OCI-LY7 (cell line): ENCODE measurements at regions of chr12 and their contacts with region 1.

Region 1: GRCh38 chr12:108570743-108571608 is 8.6 kb downstream of the ISCU start:
- DNase-seq: peak; percentile 75
- H3K4me3 ChIP-seq: no peak overlapping the region
- H3K27ac ChIP-seq: peak overlapping the region; percentile 93
- H3K4me1 ChIP-seq: peaks cover 83% of the 10 kb centered on the region
- CTCF ChIP-seq: peak; percentile 76

Region 2: DNA sequence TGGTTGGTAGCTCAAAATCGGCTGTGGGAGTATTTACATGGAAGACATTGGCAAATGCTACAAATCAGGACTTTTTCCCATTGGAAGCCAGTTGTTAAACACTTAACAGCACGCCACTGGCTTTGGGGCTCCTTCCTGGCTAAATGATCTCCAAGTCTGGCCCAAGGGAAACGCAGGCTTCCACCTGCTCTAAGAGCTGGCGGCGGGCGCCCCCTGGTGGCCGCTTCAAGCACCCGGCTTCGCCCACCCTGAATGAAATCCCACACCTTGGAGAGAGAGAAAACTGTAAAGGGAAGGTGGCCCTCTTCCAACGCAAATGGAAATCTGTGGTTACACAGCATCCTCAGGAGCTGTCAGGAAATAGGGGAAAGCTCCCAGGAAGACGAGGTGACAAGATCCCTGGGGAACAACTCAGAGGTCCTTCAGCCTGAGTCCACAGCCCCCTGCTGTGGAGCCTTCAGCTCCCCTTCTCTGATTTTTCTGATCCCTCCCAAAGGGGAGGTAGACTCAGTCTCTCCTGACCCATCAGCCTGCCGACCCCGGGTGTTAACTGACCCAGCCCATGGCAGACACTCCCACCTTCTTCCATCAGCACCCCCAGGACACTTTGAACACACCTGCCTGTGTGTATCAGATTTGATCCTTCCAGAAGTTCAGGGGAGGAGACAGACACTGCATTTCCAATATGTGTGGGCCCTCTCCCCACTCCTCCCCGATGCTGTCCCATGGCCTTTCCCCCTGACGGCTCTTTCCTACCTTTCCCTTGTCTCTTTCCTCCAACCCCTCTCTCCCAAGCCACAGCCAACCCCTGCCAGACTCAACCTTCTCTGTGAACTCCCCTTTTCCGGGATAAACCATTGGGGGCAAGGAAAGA is 47.3 kb after region 1 on chr12:
- CTCF ChIA-PET with region 1: interaction called, 13 read pairs
- POLR2A ChIA-PET with region 1: interaction called, 47 read pairs
- intact Hi-C with region 1: loop called (anchors 1 kb)
- DNase-seq: peak; percentile 88
- H3K4me3 ChIP-seq: no peak overlapping the region
- H3K27ac ChIP-seq: peak overlapping the region; percentile 61
- H3K4me1 ChIP-seq: peaks cover 37% of the 10 kb centered on the region
- CTCF ChIP-seq: peak; percentile 100

Region 3: GRCh38 chr12:109044241-109044640 is 473.3 kb after region 1 on chr12:
- CTCF ChIA-PET with region 1: no interaction called
- POLR2A ChIA-PET with region 1: no interaction called
- intact Hi-C with region 1: no loop called
- DNase-seq: no peak
- H3K4me3 ChIP-seq: no peak overlapping the region
- H3K27ac ChIP-seq: no peak overlapping the region
- H3K4me1 ChIP-seq: no peaks in the 10 kb centered on the region
- CTCF ChIP-seq: no peak